ENCODE measurements at regions of chr5 and their contacts with region 1.

Region 1: GRCh38 chr5:150058480-150059126 is 27.8 kb downstream of the CSF1R start:
- DNase-seq: no peak
- ATAC-seq: peak; percentile 40 to 43
- H3K4me3 ChIP-seq: no peak overlapping the region
- H3K27ac ChIP-seq: no peak overlapping the region
- H3K4me1 ChIP-seq: no peaks in the 10 kb centered on the region
- H3K27me3 ChIP-seq: no peaks in the 10 kb centered on the region

Region 2: DNA sequence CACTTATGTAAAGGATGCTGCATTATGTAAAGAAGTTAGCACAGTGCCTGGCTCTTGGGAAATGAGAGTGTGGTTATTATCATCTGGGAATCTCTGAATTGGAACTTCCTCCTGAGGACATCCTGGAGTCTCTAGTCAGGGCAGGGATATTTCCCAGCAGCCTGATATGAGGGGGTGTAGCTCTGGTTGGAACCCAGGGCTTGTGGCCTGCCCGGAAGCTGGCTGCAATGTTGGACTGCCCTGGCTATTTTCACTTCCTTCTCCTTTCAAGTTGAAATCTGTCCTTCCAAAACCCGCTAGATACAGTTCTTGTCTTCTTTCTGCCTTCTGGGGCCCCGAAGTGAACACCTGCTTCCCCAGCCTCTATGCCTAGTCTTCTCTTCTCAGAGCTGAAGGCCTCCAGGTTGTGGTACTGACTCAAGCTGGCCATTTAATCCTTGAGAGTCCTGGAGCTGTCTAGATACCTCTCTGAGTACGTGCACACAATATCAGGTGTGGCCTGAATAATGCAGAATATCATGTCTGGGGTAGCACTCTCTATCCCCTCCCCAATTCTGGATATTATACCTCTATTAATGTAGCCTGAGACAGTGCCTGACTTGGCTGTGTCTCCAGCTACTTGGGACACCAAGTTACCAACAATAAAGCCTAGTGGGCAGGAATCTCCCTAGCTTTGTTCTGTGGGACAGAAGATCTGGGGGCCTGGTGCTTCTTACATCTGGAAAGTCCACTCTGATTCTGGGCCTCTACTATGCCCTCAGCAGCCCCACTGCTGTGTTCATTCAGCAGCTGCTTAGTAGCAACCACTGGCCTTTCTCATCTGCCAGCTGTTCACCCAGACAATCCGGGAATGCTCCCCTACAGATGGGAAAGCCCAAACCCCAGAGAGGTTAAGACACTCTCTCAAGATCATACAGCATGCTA is 176.2 kb after region 1 on chr5:
- intact Hi-C with region 1: loop called in 1 of 4 experiments (anchors 10 kb)
- DNase-seq: peak in 1 of 3 donors; percentile 55
- ATAC-seq: peak; percentile 53 to 58
- H3K4me3 ChIP-seq: no peak overlapping the region
- H3K27ac ChIP-seq: no peak overlapping the region
- H3K4me1 ChIP-seq: no peaks in the 10 kb centered on the region
- H3K27me3 ChIP-seq: no peaks in the 10 kb centered on the region

Measured in right cardiac atrium (tissue), 5 donors.